Transverse colon (tissue), 4 donors: ENCODE measurements at regions of chr9 and their contacts with region 1.

Region 1: DNA sequence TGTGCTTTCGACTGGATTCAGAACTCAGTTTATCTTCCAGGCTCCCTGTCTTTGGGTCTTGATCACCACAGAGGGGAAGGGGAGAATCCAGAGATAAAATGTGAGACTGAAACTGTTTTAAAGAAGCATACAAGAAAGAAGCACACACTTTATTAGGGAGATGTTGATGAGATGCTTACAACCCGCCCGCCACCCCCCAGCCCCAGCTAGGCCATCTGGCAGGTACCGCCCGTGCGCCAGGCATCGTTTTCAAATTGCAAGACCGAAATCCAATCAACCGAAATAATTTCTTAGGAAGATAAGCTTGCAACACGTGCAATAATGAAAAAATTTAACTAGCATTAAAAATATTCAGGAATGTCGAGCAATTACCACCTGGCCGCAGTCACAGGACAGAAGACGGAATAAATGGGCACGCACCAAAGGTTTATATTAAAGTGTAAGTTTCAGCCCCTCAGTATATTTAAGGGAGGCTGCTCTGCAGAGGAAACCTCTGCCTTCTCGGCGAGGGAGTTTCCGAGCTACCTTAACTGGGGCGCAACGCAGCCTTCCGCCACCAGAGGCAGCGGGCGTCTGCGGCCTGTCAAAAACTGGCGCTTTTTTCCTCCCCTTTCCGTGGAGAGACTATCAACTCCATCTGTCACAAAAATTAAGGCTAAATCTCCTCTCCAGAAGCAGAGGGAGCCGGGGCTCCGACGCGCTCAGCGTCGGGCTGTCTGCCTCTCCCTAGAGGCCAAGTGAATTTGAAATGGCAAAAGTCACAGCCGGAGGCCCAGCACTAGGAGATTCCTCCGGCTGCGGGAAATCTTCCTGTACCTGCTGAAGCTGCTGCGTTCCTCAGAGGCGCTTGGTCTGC is 996 bp upstream of the GAS1 start:
- DNase-seq: peak; percentile 75
- H3K4me3 ChIP-seq: peak overlapping the region; percentile 66 to 91 (median 80)
- H3K27ac ChIP-seq: peak overlapping the region; percentile 83 to 96 (median 88)
- H3K4me1 ChIP-seq: peaks cover 0 to 28% (median 17%) of the 10 kb centered on the region in 4 donors
- H3K27me3 ChIP-seq: peaks cover 25% of the 10 kb centered on the region
- CTCF ChIP-seq: peak; percentile 77 to 93 (median 86)
- EP300 ChIP-seq: no peak
- POLR2A ChIP-seq: no peak

Region 2: DNA sequence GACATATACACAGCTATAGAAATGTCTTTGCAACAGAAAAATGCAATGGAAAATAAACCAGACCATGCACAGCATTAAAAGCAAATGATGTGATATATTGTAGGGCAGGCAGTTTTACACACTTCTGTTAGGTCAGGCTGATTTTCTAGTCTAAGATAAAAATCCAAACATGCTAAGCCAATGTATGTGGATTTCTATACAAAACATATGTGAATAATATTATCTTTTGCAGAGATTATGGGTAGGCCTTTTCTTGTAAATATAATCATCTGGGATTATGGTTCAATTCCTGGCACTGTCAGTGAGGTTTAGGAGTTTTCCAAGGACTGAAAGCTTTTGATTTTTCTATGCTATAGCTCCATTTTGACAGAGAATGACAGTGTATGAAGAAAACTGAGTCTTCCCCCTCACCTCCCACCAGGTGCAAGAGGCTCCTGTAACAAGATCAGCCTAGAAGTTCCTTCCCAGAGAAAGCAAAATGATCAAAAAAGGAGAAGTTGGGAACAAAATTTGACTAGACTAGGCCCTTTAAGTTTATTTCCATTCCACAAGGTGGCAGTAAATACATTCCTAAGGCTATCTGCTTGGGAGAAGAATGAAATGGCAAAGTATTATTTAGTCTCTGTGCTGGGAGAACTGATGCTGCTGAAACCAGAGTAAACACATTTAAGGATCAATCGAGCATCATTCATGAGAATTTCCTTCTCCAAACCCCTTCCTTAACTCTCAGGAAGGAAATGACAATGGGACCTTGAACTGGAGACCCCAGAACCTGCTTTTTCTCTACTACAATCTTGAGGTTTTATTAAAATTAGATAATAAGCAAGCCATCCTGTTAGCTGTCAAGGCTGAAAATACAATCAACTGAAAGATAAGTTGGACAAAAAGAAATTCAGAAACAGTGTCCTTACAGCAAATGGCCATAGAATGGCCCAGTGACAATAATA is 461.1 kb before region 1 on chr9:
- in situ Hi-C with region 1: no loop called
- intact Hi-C with region 1: loop called (anchors 5 kb)
- DNase-seq: no peak
- H3K4me3 ChIP-seq: no peak overlapping the region
- H3K27ac ChIP-seq: peak overlapping the region in 1 of 4 donors; percentile 29
- H3K4me1 ChIP-seq: peaks cover 0 to 4% (median 0%) of the 10 kb centered on the region in 4 donors
- H3K27me3 ChIP-seq: no peaks in the 10 kb centered on the region
- CTCF ChIP-seq: peak; percentile 36 to 60 (median 54)
- EP300 ChIP-seq: no peak
- POLR2A ChIP-seq: no peak

Region 3: GRCh38 chr9:86580688-86581087 is 367.6 kb before region 1 on chr9:
- in situ Hi-C with region 1: no loop called
- intact Hi-C with region 1: no loop called
- DNase-seq: no peak
- H3K4me3 ChIP-seq: no peak overlapping the region
- H3K27ac ChIP-seq: peak overlapping the region in 1 of 4 donors; percentile 58
- H3K4me1 ChIP-seq: peaks cover 0 to 4% (median 0%) of the 10 kb centered on the region in 4 donors
- H3K27me3 ChIP-seq: no peaks in the 10 kb centered on the region
- CTCF ChIP-seq: no peak
- EP300 ChIP-seq: no peak
- POLR2A ChIP-seq: no peak

Region 4: GRCh38 chr9:87034841-87035240 is 86.5 kb after region 1 on chr9:
- in situ Hi-C with region 1: no loop called
- intact Hi-C with region 1: loop called (anchors 5 kb)
- DNase-seq: no peak
- H3K4me3 ChIP-seq: no peak overlapping the region
- H3K27ac ChIP-seq: peak overlapping the region; percentile 51 to 79 (median 70)
- H3K4me1 ChIP-seq: peaks cover 0 to 10% (median 4%) of the 10 kb centered on the region in 4 donors
- H3K27me3 ChIP-seq: no peaks in the 10 kb centered on the region
- CTCF ChIP-seq: no peak
- EP300 ChIP-seq: no peak
- POLR2A ChIP-seq: no peak

Region 5: GRCh38 chr9:87122947-87123685 is 174.8 kb after region 1 on chr9:
- in situ Hi-C with region 1: no loop called
- intact Hi-C with region 1: loop called (anchors 10 kb)
- DNase-seq: no peak
- H3K4me3 ChIP-seq: no peak overlapping the region
- H3K27ac ChIP-seq: peak overlapping the region; percentile 12 to 71 (median 54)
- H3K4me1 ChIP-seq: peaks cover 0 to 18% (median 3%) of the 10 kb centered on the region in 4 donors
- H3K27me3 ChIP-seq: no peaks in the 10 kb centered on the region
- CTCF ChIP-seq: no peak
- EP300 ChIP-seq: no peak
- POLR2A ChIP-seq: no peak